HepG2 (cell line): ENCODE measurements at regions of chr11 and their contacts with region 1.

Region 1: DNA sequence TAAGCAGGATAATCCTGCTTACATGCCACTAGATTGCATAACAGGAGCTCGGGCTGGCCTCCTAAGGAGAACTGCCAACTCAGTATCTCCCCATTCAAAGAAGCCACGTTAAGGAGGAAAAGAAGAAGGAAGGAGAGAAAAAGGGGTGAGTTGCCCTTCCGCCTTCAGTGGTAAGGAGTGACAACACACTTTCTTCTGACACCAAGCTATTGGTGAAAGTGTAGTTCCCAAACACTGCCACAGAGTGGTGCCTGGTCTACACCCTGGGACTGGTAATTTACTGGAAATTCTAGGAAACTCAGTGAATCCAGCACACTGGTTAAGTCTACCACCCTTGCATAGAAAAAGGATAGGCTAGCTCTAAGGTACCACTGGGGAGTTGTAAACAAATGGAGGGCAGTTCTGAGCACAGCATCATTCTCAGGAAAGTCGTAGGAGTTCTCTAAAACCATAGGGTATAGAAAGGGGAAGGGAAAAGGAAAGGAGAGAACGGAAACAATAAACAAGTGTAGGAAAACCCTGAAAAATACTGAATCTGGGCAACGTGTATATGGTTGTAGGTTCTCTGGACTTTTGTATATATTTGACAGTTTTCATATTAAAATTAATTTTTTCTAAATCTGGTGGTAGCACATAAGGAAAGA is 58.2 kb downstream of the RRAS2 start:
- DNase-seq: peak; percentile 59
- ATAC-seq: peak; percentile 98
- H3K4me3 ChIP-seq: no peak overlapping the region
- H3K27ac ChIP-seq: no peak overlapping the region
- H3K4me1 ChIP-seq: peaks cover 8% of the 10 kb centered on the region
- H3K27me3 ChIP-seq: no peaks in the 10 kb centered on the region
- CTCF ChIP-seq: peak; percentile 75
- EP300 ChIP-seq: no peak
- POLR2A ChIP-seq: no peak
- RAD21 ChIP-seq: peak; percentile 81

Region 2: GRCh38 chr11:14249121-14249963 is 51.4 kb before region 1 on chr11:
- CTCF ChIA-PET with region 1: no interaction called
- POLR2A ChIA-PET with region 1: no interaction called
- in situ Hi-C with region 1: no loop called
- intact Hi-C with region 1: no loop called
- DNase-seq: peak; percentile 35
- ATAC-seq: peak; percentile 65
- H3K4me3 ChIP-seq: no peak overlapping the region
- H3K27ac ChIP-seq: no peak overlapping the region
- H3K4me1 ChIP-seq: no peaks in the 10 kb centered on the region
- H3K27me3 ChIP-seq: peaks cover 0 to 23% of the 10 kb centered on the region in 2 experiments; a peak in 2 of 5 replicates
- CTCF ChIP-seq: peak; percentile 89
- EP300 ChIP-seq: no peak
- POLR2A ChIP-seq: no peak
- RAD21 ChIP-seq: peak; percentile 78

Region 3: GRCh38 chr11:14413307-14414069 is 112.7 kb after region 1 on chr11:
- CTCF ChIA-PET with region 1: interaction called, 19 read pairs
- POLR2A ChIA-PET with region 1: no interaction called
- in situ Hi-C with region 1: loop called (anchors 10 kb)
- intact Hi-C with region 1: no loop called
- DNase-seq: no peak
- ATAC-seq: no peak
- H3K4me3 ChIP-seq: no peak overlapping the region
- H3K27ac ChIP-seq: no peak overlapping the region
- H3K4me1 ChIP-seq: 0 out of 2 replicates have a peak, but pooled peaks cover 5% of the 10 kb centered on the region
- H3K27me3 ChIP-seq: 0 out of 5 replicates have a peak, but pooled peaks cover 0 to 4% of the 10 kb centered on the region in 2 experiments
- CTCF ChIP-seq: no peak
- EP300 ChIP-seq: no peak
- POLR2A ChIP-seq: no peak
- RAD21 ChIP-seq: no peak

Region 4: DNA sequence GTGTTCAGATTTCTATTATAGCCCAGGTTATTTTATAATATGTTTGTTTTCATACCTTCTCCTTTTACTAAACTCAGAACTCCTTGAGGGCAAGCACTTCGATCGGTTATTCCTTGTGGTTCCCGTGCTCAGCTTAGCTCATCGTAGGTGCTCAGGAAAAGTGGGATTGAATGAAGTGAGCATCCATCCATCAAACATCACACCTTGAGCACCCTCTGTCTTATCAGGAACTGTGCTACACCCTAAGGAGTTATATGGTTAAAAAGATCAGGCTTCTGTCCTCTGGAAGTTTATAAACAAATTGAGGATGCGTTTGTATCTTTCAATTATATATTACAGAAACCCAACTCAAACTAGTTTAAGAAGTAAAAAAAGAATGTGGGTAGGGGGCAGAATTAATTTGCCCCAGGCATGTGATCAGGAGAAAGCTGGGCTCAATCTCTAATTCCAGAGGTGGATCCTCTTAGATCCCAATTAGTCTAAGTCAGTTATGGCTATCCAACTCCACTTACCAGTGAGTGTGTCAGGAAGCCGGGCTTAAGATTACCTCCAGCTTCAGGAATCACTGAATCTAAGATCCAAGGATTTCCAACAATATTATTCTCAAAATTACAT is 118.1 kb after region 1 on chr11:
- CTCF ChIA-PET with region 1: interaction called, 19 read pairs
- POLR2A ChIA-PET with region 1: no interaction called
- in situ Hi-C with region 1: loop called (anchors 10 kb)
- intact Hi-C with region 1: loop called (anchors 1 kb)
- DNase-seq: peak; percentile 38
- ATAC-seq: peak; percentile 59
- H3K4me3 ChIP-seq: no peak overlapping the region
- H3K27ac ChIP-seq: no peak overlapping the region
- H3K4me1 ChIP-seq: peaks cover 27% of the 10 kb centered on the region
- H3K27me3 ChIP-seq: no peaks in the 10 kb centered on the region
- CTCF ChIP-seq: peak; percentile 68
- EP300 ChIP-seq: no peak
- POLR2A ChIP-seq: no peak
- RAD21 ChIP-seq: no peak

Region 5: DNA sequence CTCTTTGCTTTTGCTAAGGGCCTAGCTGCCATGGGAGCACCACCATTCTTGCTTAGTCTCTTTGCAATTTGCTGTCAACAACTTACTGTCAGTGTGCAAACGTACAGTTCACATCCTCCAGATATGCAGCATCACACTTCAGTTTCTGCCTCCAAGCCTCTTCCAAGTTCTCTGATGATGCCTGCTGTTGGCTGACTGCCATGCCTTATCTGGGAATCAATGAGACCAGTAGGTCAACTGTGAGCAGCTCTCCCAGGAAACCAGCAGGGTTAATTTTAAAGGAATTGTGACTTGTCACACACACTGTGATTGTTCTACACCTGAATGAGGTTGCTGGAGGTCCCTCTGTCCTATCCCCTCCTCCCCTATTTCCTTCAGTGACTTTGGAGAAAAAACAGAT is 142.9 kb after region 1 on chr11:
- CTCF ChIA-PET with region 1: no interaction called
- POLR2A ChIA-PET with region 1: no interaction called
- in situ Hi-C with region 1: loop called (anchors 10 kb)
- intact Hi-C with region 1: no loop called
- DNase-seq: peak; percentile 46
- ATAC-seq: peak; percentile 74
- H3K4me3 ChIP-seq: no peak overlapping the region
- H3K27ac ChIP-seq: no peak overlapping the region
- H3K4me1 ChIP-seq: no peaks in the 10 kb centered on the region; the same call in 1 of the 2 replicates
- H3K27me3 ChIP-seq: no peaks in the 10 kb centered on the region; a peak in 1 of 5 replicates
- CTCF ChIP-seq: no peak
- EP300 ChIP-seq: no peak
- POLR2A ChIP-seq: no peak
- RAD21 ChIP-seq: no peak

Region 6: GRCh38 chr11:14454861-14455632 is 154.3 kb after region 1 on chr11:
- CTCF ChIA-PET with region 1: interaction called, 11 read pairs
- POLR2A ChIA-PET with region 1: no interaction called
- in situ Hi-C with region 1: no loop called
- intact Hi-C with region 1: loop called (anchors 1 kb)
- DNase-seq: peak; percentile 9
- ATAC-seq: peak; percentile 59
- H3K4me3 ChIP-seq: no peak overlapping the region
- H3K27ac ChIP-seq: no peak overlapping the region
- H3K4me1 ChIP-seq: no peaks in the 10 kb centered on the region
- H3K27me3 ChIP-seq: no peaks in the 10 kb centered on the region
- CTCF ChIP-seq: peak; percentile 40
- EP300 ChIP-seq: no peak
- POLR2A ChIP-seq: no peak
- RAD21 ChIP-seq: no peak